CD8-positive, alpha-beta T cell (primary cell): ENCODE measurements at regions of chr14 and their contacts with region 1.

Region 1: GRCh38 chr14:98840091-98840490 is 431.9 kb downstream of the BCL11B start:
- DNase-seq: no peak
- ATAC-seq: no peak
- H3K4me3 ChIP-seq: no peak overlapping the region
- H3K4me3 Mint-ChIP-seq: no peak overlapping the region
- H3K27ac ChIP-seq: no peak overlapping the region
- H3K27ac Mint-ChIP-seq: no peak overlapping the region
- H3K4me1 ChIP-seq: peaks cover 4% of the 10 kb centered on the region
- H3K4me1 Mint-ChIP-seq: peaks cover 9% of the 10 kb centered on the region
- H3K27me3 ChIP-seq: no peaks in the 10 kb centered on the region
- H3K27me3 Mint-ChIP-seq: peaks cover 3% of the 10 kb centered on the region
- CTCF ChIP-seq: no peak

Region 2: DNA sequence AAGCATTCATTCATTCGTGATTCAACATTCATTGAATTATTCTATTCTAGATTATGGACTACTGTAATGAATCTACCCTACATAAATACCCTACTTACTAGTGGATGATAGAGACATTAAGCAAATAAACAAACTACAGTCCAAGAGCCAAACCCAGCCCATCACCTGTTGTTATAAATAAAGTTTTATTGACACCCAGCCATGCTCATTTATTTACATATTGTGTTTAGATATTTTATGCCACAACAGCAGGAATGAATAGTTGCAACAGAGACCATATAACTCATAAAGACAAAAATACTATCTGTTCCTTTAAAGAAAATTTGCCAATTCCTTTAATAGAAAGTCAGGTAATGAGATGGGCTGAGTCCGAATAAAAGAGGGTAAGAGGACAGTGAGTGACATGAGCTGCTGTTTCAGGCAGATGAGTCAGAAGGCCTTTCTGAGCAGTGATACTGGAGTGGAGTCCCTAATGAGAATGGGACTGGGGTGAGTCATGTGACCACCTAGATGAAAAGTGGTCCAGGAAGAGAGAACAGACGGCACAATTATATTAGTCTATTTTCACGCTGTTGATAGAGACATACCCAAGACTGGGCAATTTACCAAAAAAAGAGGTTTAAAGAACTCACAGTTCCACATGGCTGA is 38.1 kb after region 1 on chr14:
- CTCF ChIA-PET with region 1: no interaction called
- POLR2A ChIA-PET with region 1: no interaction called
- intact Hi-C with region 1: loop called in 1 of 2 experiments (anchors 2 kb)
- DNase-seq: no peak
- ATAC-seq: no peak
- H3K4me3 ChIP-seq: no peak overlapping the region
- H3K4me3 Mint-ChIP-seq: no peak overlapping the region
- H3K27ac ChIP-seq: no peak overlapping the region
- H3K27ac Mint-ChIP-seq: no peak overlapping the region
- H3K4me1 ChIP-seq: no peaks in the 10 kb centered on the region
- H3K4me1 Mint-ChIP-seq: no peaks in the 10 kb centered on the region
- H3K27me3 ChIP-seq: no peaks in the 10 kb centered on the region
- H3K27me3 Mint-ChIP-seq: no peaks in the 10 kb centered on the region
- CTCF ChIP-seq: no peak